ENCODE measurements at regions of chr4 and their contacts with region 1.

Region 1: GRCh38 chr4:165234766-165235165 is 27.4 kb downstream of the KLHL2 start:
- DNase-seq: no peak
- H3K4me3 Mint-ChIP-seq: no peak overlapping the region
- H3K27ac Mint-ChIP-seq: no peak overlapping the region
- H3K4me1 Mint-ChIP-seq: peaks cover 60% of the 10 kb centered on the region
- H3K27me3 Mint-ChIP-seq: no peaks in the 10 kb centered on the region

Region 2: DNA sequence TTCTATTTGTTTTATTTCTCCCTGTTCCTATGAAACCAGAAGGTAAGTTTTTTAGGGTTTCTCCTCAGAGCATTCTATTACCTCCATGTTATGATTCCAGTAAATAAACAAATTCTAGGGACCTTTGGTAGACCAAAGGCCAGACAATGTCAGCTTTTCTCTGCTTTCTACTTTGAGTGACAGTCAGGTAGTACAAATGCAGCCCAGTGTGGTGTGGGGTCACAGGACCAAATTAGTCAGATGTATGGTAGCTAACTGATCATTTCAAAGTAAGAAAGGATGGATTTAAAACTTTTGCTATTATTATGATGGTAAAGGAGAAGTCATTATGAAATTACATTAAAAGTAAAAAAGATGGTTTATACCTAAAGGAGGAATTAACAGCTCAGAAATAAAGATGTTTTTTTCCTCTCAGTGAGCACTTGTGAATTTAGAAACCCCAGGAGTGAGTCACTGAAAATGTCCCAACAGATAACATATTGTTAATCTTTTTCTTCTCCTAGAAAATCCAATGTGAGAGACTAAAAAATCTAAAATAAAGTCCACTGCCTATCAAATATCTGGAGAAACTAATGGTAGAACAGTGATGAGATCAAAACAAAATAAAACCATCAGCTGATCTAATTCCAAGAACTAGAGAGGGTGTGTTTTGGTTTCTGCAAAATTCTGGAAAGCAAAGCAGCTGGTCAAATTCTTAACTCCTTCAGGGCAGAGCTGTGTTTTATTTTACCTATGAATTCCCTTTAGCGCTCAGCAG is 44.0 kb before region 1 on chr4:
- intact Hi-C with region 1: loop called (anchors 2 kb)
- DNase-seq: no peak
- H3K4me3 Mint-ChIP-seq: peak overlapping the region; percentile 12
- H3K27ac Mint-ChIP-seq: peak overlapping the region; percentile 79
- H3K4me1 Mint-ChIP-seq: peaks cover 34% of the 10 kb centered on the region
- H3K27me3 Mint-ChIP-seq: no peaks in the 10 kb centered on the region

Region 3: GRCh38 chr4:165217325-165217724 is 17.4 kb before region 1 on chr4:
- intact Hi-C with region 1: loop called (anchors 2 kb)
- DNase-seq: no peak
- H3K4me3 Mint-ChIP-seq: peak overlapping the region; percentile 13
- H3K27ac Mint-ChIP-seq: peak overlapping the region; percentile 28
- H3K4me1 Mint-ChIP-seq: peaks cover 88% of the 10 kb centered on the region
- H3K27me3 Mint-ChIP-seq: no peaks in the 10 kb centered on the region

Measured in activated T-helper 1 cell treated with anti-CD3 and anti-CD28 coated beads, Interleukin-12 subunit alpha, Interleukin-12 subunit beta, Interleukin-2, Interleukin-4 antibody, amounts not matched to agents 30 ng/mL and 10 ng/mL and 1 ng/mL, durations not matched to agents 14 hours and 24 hours and 36 hours (primary cell).